IMR-90 (cell line): ENCODE measurements at regions of chr11 and their contacts with region 1.

Region 1: GRCh38 chr11:66069715-66070603 is at the start of gene PACS1:
- DNase-seq: peak; percentile 73
- ATAC-seq: peak; percentile 83
- H3K4me3 ChIP-seq: peak within 1 kb of the TSS; percentile 99
- H3K27ac ChIP-seq: peak within 1 kb of the TSS; percentile 83
- H3K4me1 ChIP-seq: peaks cover 12% of the 10 kb centered on the region
- H3K27me3 ChIP-seq: no peaks in the 10 kb centered on the region
- CTCF ChIP-seq: no peak
- POLR2A ChIP-seq: 0 out of 2 replicates have a peak, but pooled peaks have one; percentile 36
- RAD21 ChIP-seq: no peak
- total RNA-seq, gene PACS1: 7.3 and 8.6 TPM in 2 replicates

Region 2: GRCh38 chr11:66051766-66052663 is 17.9 kb before region 1 on chr11 and contains the start of gene SF3B2:
- CTCF ChIA-PET with region 1: interaction called, 11 read pairs
- POLR2A ChIA-PET with region 1: no interaction called
- dilution Hi-C with region 1: no loop called
- in situ Hi-C with region 1: no loop called
- intact Hi-C with region 1: no loop called
- DNase-seq: peak; percentile 98
- ATAC-seq: peak; percentile 98
- H3K4me3 ChIP-seq: peak within 1 kb of the TSS; percentile 86
- H3K27ac ChIP-seq: peak within 1 kb of the TSS; percentile 87
- H3K4me1 ChIP-seq: peaks cover 8% of the 10 kb centered on the region
- H3K27me3 ChIP-seq: peaks cover 15% of the 10 kb centered on the region; the same call in 1 of the 2 replicates
- CTCF ChIP-seq: no peak
- POLR2A ChIP-seq: peak; percentile 84
- RAD21 ChIP-seq: no peak
- total RNA-seq, gene SF3B2: 120 and 164 TPM in 2 replicates

Region 3: GRCh38 chr11:66112601-66113098 is 42.7 kb after region 1 on chr11:
- CTCF ChIA-PET with region 1: no interaction called
- POLR2A ChIA-PET with region 1: no interaction called
- dilution Hi-C with region 1: no loop called
- in situ Hi-C with region 1: no loop called
- intact Hi-C with region 1: loop called (anchors 5 kb)
- DNase-seq: peak; percentile 76
- ATAC-seq: peak; percentile 76
- H3K4me3 ChIP-seq: no peak overlapping the region
- H3K27ac ChIP-seq: peak overlapping the region; percentile 88
- H3K4me1 ChIP-seq: peaks cover 15% of the 10 kb centered on the region
- H3K27me3 ChIP-seq: no peaks in the 10 kb centered on the region
- CTCF ChIP-seq: no peak
- POLR2A ChIP-seq: no peak
- RAD21 ChIP-seq: no peak

Region 4: GRCh38 chr11:66136752-66137123 is 66.8 kb after region 1 on chr11:
- CTCF ChIA-PET with region 1: interaction called, 5 read pairs
- POLR2A ChIA-PET with region 1: no interaction called
- dilution Hi-C with region 1: no loop called
- in situ Hi-C with region 1: no loop called
- intact Hi-C with region 1: loop called (anchors 1 kb)
- DNase-seq: peak; percentile 87
- ATAC-seq: peak; percentile 49
- H3K4me3 ChIP-seq: no peak overlapping the region
- H3K27ac ChIP-seq: peak overlapping the region; percentile 59; the same call in 1 of the 2 replicates
- H3K4me1 ChIP-seq: peaks cover 10% of the 10 kb centered on the region
- H3K27me3 ChIP-seq: no peaks in the 10 kb centered on the region
- CTCF ChIP-seq: no peak
- POLR2A ChIP-seq: no peak
- RAD21 ChIP-seq: peak; percentile 25; the same call in 1 of the 2 replicates

Region 5: GRCh38 chr11:66258473-66258893 is 188.5 kb after region 1 on chr11:
- CTCF ChIA-PET with region 1: no interaction called
- POLR2A ChIA-PET with region 1: no interaction called
- dilution Hi-C with region 1: no loop called
- in situ Hi-C with region 1: no loop called
- intact Hi-C with region 1: loop called (anchors 2 kb)
- DNase-seq: no peak
- ATAC-seq: peak; percentile 4
- H3K4me3 ChIP-seq: peak overlapping the region; percentile 72
- H3K27ac ChIP-seq: peak overlapping the region; percentile 72
- H3K4me1 ChIP-seq: peaks cover 8% of the 10 kb centered on the region; the same call in 1 of the 2 replicates
- H3K27me3 ChIP-seq: no peaks in the 10 kb centered on the region
- CTCF ChIP-seq: no peak
- POLR2A ChIP-seq: no peak
- RAD21 ChIP-seq: no peak